ENCODE measurements at regions of chr15 and their contacts with region 1.

Region 1: DNA sequence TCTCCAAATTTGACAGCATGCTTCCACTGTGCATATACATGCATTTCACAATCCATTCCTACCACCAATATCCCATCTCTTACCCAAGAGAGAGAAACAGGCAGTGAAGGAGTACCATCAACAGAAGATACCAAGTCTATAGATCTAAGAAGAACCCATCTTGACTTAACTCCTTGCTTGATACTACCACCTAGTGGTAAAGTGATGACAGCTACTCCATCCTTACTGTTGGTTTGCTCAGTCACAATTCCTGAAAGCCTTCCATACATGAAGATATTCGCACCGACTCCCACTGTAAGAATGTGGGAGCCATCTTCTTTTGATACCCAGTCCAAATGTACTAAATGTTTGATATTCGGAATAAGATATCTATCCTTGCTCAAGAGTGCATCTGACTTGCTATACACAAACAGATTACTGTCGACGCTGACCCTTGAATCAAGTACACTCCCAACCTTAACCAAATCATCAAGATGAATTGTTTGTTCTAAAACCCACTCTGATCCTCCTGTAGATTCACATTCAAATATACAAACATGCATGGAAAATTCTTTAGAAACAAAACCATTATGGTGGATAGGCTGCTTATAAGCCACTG is 123.1 kb downstream of the DMXL2 start:
- DNase-seq: no peak
- H3K4me3 ChIP-seq: no peak overlapping the region
- H3K27ac ChIP-seq: no peak overlapping the region
- H3K4me1 ChIP-seq: no peaks in the 10 kb centered on the region
- H3K27me3 ChIP-seq: no peaks in the 10 kb centered on the region
- CTCF ChIP-seq: peak; percentile 64

Region 2: DNA sequence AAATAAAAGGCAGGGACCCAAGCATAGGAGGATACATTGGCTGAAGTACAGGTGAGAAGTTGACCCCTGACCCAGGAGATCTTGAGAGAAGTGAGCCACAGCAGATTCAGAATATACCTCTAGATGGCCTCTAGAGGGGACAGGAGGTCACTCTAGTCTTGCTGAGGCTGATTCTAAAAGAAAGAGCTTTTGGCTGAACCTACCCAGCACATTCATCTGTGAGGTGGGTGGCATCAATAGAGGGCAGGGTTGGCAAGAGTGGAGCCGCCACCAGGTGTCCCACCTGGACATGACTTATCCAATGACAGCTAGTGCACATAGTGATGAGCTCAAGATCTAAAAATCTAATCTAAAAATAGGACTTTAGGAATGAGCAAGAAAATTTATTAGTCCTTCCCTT is 212.7 kb before region 1 on chr15:
- CTCF ChIA-PET with region 1: no interaction called
- POLR2A ChIA-PET with region 1: no interaction called
- intact Hi-C with region 1: loop called (anchors 2 kb)
- DNase-seq: peak in 1 of 2 experiments; percentile 16
- H3K4me3 ChIP-seq: no peak overlapping the region
- H3K27ac ChIP-seq: no peak overlapping the region
- H3K4me1 ChIP-seq: no peaks in the 10 kb centered on the region
- H3K27me3 ChIP-seq: peaks cover 4% of the 10 kb centered on the region
- CTCF ChIP-seq: no peak

Measured in PC-9 (cell line).